ENCODE measurements at regions of chr1 and their contacts with region 1.

Region 1: DNA sequence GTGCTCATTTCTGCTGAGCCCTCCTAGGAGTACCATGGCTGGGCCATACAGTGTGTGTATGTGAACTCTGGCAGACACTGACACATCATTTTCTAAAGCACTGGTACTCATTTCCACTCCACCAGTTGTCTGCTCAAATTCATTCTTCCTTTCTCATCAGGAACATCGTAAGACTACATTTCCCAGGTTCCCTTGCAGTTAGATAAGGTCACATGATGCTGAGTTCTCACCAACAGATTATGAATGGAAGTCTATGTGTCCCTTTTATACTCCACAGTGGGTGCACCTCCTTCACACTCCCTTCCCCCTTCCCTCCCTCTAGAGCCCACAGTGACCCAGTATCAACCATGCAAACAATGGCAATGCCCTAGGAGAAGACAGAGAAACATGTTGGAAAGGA is 38.3 kb upstream of the PAX7 start:
- DNase-seq: no peak
- H3K4me3 ChIP-seq: no peak overlapping the region
- H3K27ac ChIP-seq: no peak overlapping the region
- H3K4me1 ChIP-seq: no peaks in the 10 kb centered on the region
- H3K27me3 ChIP-seq: 0 out of 2 replicates have a peak, but pooled peaks cover 9% of the 10 kb centered on the region

Region 2: DNA sequence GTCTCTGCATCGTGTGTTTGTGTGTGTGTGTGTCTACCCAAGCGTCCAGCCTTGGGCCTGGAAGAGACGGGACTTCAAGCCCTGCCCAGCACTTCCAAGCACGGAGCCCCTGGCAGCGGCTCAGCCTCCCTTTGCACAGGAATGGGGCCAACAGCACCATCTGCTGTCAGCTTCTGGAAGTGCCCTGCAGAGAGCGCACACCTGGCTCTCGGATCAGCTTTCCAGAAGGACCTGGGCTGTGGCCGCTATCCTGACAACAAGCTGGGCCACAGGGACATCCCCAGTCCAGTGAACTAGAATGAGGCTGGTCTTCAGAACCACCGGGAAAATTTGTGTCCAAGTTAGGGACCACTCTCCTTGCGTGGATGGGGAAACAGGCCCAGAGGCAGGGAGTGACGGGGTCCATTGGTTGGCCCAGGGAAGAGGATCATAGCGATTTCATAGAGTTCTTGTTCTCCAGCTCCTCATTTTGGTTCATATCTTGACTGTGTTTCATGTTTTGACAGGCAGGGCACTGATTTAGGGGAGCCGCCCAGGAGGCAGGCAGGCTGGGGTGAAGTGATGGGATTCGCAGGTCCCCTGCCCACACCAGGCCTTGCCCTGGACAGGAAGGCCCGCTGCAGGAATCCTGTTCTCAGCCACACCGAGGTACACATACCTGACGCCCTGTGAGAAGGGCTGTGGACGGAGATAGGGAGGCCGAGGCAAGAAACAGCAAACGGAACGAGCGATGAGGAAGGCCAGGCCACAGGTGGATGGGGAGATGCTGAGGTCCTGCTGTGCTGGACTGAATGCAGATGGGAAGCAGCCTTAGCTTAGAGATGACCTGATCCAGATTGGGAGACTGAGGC is 228.6 kb after region 1 on chr1:
- in situ Hi-C with region 1: loop called (anchors 5 kb)
- DNase-seq: peak; percentile 80
- H3K4me3 ChIP-seq: no peak overlapping the region
- H3K27ac ChIP-seq: no peak overlapping the region
- H3K4me1 ChIP-seq: no peaks in the 10 kb centered on the region
- H3K27me3 ChIP-seq: peaks cover 8% of the 10 kb centered on the region